Activated naive CD4-positive, alpha-beta T cell treated with anti-CD3 and anti-CD28 coated beads for 36 hours (primary cell): ENCODE measurements at regions of chr7 and their contacts with region 1.

Region 1: GRCh38 chr7:23273141-23273599 is 26.0 kb upstream of the MALSU1 start:
- DNase-seq: peak; percentile 97
- H3K4me3 Mint-ChIP-seq: peak overlapping the region; percentile 67
- H3K27ac Mint-ChIP-seq: no peak overlapping the region
- H3K4me1 Mint-ChIP-seq: peaks cover 7% of the 10 kb centered on the region
- H3K27me3 Mint-ChIP-seq: peaks cover 2% of the 10 kb centered on the region

Region 2: DNA sequence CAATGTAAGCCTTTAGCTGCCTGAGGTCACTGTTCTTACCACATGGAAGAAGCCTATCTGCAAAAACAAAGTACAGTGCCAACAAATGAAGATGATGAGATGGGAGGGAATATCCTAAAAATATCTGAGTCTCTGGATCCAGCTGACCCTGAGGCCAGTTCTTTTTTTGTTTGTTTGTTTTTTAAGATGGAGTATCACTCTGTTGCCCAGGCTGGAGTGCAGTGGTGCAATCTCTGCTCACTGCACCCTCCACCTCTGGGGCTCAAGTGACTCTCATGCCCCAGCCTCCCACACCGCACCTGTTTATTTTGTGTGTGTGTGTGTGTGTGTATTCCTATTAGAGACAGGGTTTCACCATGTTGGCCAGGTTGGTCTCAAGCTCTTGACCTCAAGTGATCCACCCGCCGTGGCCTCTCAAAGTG is 304.1 kb before region 1 on chr7:
- CTCF ChIA-PET with region 1: no interaction called
- intact Hi-C with region 1: no loop called
- DNase-seq: no peak
- H3K4me3 Mint-ChIP-seq: no peak overlapping the region
- H3K27ac Mint-ChIP-seq: no peak overlapping the region
- H3K4me1 Mint-ChIP-seq: no peaks in the 10 kb centered on the region
- H3K27me3 Mint-ChIP-seq: no peaks in the 10 kb centered on the region

Region 3: DNA sequence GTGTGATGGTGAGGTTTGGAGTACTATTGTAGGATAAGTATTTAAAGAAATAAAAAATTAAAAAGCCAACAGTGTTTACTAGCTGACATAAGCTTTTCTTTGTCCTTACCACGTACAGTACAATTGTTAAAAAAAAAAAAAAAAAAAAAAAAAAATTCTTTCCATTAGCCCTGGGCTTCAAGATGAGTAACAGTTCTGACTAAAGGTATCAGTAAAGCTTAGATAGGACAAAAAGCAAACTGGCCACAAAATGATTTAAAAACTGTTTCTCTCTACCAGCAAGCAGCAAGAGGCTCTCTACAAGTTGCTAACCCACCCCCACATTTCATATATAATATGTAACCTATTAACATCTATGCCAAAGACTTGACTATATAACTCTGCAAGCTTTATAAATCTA is 276.7 kb before region 1 on chr7:
- CTCF ChIA-PET with region 1: no interaction called
- intact Hi-C with region 1: no loop called
- DNase-seq: no peak
- H3K4me3 Mint-ChIP-seq: no peak overlapping the region
- H3K27ac Mint-ChIP-seq: no peak overlapping the region
- H3K4me1 Mint-ChIP-seq: peaks cover 33% of the 10 kb centered on the region
- H3K27me3 Mint-ChIP-seq: no peaks in the 10 kb centered on the region

Region 4: GRCh38 chr7:23181684-23182553 is 91.3 kb before region 1 on chr7 and contains the start of gene NUP42:
- CTCF ChIA-PET with region 1: interaction called, 3 read pairs
- intact Hi-C with region 1: loop called (anchors 1 kb)
- DNase-seq: peak; percentile 98
- H3K4me3 Mint-ChIP-seq: peak within 1 kb of the TSS; percentile 99
- H3K27ac Mint-ChIP-seq: peak within 1 kb of the TSS; percentile 99
- H3K4me1 Mint-ChIP-seq: peaks cover 35% of the 10 kb centered on the region
- H3K27me3 Mint-ChIP-seq: no peaks in the 10 kb centered on the region
- total RNA-seq, gene NUP42: 15.2 to 17.0 TPM

Region 5: DNA sequence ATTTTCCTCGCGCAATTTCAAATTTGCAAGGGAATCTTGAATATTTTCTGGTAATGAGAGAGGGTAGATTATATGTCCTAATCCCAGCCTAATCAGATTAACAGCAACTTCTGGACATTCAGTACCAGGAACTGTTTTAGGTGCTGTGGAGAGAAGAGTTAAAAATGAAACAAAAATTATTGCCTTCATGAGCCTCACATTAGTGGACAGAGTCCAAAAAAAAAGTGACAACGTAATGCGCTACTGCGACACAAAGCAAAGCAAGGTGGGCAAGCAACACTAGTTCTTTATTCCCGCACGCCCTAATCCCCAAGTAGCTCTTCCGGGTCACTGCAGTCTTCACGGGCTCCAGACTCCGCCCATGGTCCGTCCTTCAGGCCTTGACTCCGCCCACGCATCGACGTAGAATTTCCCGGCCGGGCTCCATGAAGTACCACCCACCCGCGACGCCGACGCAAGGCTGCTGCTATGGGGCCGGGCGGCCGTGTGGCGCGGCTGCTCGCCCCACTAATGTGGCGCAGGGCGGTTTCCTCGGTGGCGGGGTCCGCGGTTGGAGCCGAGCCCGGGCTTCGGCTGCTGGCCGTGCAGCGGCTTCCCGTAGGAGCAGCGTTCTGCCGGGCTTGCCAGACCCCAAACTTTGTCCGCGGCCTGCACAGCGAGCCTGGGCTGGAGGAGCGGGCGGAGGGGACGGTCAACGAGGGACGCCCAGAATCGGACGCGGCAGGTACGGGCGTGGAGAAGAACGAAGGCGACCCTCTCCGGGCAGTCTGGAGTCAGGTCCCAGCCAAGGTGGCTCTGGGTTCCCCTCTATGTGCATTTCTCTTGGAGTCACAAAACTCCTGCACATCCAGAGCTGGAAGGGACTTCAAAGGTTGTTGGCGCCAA is 26.0 kb after region 1 on chr7 and contains the start of gene MALSU1:
- CTCF ChIA-PET with region 1: interaction called, 18 read pairs
- intact Hi-C with region 1: loop called (anchors 1 kb)
- DNase-seq: peak; percentile 99
- H3K4me3 Mint-ChIP-seq: peak within 1 kb of the TSS; percentile 96
- H3K27ac Mint-ChIP-seq: peak within 1 kb of the TSS; percentile 95
- H3K4me1 Mint-ChIP-seq: peaks cover 30% of the 10 kb centered on the region
- H3K27me3 Mint-ChIP-seq: no peaks in the 10 kb centered on the region
- total RNA-seq, gene MALSU1: 98.4 to 101 TPM

Region 6: GRCh38 chr7:23357190-23358093 is 84.3 kb after region 1 on chr7:
- CTCF ChIA-PET with region 1: interaction called, 34 read pairs
- intact Hi-C with region 1: loop called (anchors 1 kb)
- DNase-seq: no peak
- H3K4me3 Mint-ChIP-seq: no peak overlapping the region
- H3K27ac Mint-ChIP-seq: no peak overlapping the region
- H3K4me1 Mint-ChIP-seq: peaks cover 15% of the 10 kb centered on the region
- H3K27me3 Mint-ChIP-seq: peaks cover 3% of the 10 kb centered on the region

Region 7: DNA sequence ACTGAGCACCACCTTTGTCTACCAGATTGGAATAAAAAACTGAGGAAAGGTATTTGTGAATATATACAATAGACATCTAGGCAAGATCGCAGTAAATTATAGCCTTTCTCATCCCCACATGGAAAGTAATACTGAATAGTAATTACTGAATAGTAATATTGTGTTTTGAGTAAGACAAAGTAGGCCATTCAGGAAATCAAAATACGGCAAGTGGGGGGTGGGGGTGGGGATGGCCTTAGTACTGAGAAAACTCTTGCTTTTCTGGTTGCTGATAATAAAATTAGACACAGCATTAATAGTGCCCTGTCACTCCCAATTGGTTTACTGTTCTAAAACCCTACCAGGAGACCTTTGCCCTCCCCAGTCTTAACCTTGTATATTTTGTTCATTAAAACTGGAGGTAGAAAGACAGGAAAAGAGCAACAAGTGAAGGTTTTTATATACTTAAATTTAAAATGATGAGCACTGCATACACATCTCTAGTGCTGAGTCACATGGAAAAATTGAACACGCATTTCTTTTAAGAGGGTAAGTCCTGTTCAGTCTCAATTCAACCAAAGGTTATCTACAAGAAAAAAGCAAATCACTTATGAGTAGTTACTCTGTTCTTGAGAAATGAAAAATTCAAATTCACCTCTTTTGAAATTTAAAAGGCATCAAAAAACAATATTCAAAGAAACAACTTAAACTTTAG is 131.5 kb after region 1 on chr7:
- CTCF ChIA-PET with region 1: no interaction called
- intact Hi-C with region 1: no loop called
- DNase-seq: peak; percentile 25
- H3K4me3 Mint-ChIP-seq: no peak overlapping the region
- H3K27ac Mint-ChIP-seq: peak overlapping the region; percentile 81
- H3K4me1 Mint-ChIP-seq: peaks cover 28% of the 10 kb centered on the region
- H3K27me3 Mint-ChIP-seq: no peaks in the 10 kb centered on the region

Region 8: DNA sequence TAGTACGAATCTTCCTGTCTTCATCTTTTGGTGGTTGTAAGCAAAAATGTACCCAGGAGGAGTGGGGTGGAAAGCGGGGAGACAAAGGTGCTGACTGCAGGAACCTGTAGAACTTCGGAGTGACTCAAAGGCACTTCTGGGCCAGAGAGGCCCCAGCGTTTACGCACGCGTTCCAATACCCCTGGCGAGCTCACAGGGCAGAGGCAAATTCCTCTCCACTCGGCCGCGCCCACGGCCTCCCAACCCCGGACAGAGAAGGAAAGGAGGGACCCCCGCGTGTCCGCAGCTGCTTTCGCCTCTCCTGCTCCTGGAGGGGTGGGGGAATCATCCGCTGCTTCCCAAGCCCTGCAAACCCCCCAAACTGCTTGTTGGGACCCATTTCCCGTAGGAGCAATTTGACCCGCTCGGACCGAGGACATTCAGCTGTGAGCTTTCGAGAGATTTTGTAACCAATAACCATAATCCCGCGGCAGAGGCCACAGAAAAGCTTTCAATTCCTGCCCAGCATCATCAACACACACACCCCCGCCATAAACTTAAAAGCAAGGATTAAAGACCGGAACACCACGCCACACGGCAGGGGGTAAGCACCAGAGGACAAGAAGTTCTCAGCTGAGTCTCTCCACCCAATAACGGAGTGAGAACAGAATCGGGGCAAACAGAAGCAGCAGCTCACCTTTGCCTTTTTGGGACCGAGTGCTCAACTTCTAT is 194.8 kb after region 1 on chr7:
- CTCF ChIA-PET with region 1: interaction called, 36 read pairs
- intact Hi-C with region 1: loop called (anchors 1 kb)
- DNase-seq: peak; percentile 45
- H3K4me3 Mint-ChIP-seq: peak overlapping the region; percentile 63
- H3K27ac Mint-ChIP-seq: no peak overlapping the region
- H3K4me1 Mint-ChIP-seq: peaks cover 26% of the 10 kb centered on the region
- H3K27me3 Mint-ChIP-seq: peaks cover 68% of the 10 kb centered on the region

Region 9: DNA sequence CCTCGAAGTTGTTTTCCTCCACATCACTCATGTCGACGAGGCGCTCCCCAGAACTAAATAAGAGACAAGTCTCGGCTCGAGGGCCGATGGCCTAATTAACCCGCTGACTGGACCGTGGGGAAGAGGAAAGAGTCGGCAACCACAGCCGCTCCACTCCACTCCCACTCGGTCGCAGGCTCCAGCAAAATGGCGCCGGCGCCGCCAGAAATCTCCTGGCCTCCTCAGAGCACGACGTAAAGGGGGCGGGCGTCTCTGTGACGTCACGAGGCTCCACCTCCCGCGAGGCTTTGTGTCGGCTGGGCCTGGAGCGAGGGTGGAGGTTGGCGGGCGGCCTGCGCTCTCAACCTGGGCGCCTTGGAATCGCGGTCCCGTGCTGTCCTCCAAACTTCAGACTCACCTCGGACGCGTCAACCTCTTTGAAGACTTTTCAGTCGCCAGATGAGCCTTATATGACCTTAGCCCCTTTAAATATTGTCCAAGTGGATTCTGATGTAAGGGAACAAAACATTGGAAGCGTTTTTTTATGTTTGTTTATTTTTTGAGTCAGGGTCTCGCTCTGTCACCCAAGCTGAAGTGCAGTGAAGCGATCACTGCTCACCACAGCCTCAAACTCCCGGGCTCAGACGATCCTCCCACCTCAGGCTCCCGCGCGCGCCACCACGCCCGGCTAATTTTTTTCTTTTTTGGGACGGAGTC is 258.8 kb after region 1 on chr7 and contains the start of gene TRA2A:
- CTCF ChIA-PET with region 1: interaction called, 6 read pairs
- intact Hi-C with region 1: loop called (anchors 5 kb)
- DNase-seq: peak; percentile 99
- H3K4me3 Mint-ChIP-seq: peak within 1 kb of the TSS; percentile 99
- H3K27ac Mint-ChIP-seq: peak within 1 kb of the TSS; percentile 100
- H3K4me1 Mint-ChIP-seq: peaks cover 43% of the 10 kb centered on the region
- H3K27me3 Mint-ChIP-seq: no peaks in the 10 kb centered on the region
- total RNA-seq, gene TRA2A: 77.8 to 79.0 TPM